Activated CD4-positive, alpha-beta T cell treated with anti-CD3 and anti-CD28 coated beads for 36 hours (primary cell): ENCODE measurements at regions of chr10 and their contacts with region 1.

Region 1: GRCh38 chr10:3740157-3740871 is 44.7 kb downstream of the KLF6 start:
- DNase-seq: peak; percentile 38
- ATAC-seq: peak; percentile 85
- H3K4me3 Mint-ChIP-seq: no peak overlapping the region
- H3K27ac Mint-ChIP-seq: peak overlapping the region; percentile 60
- H3K4me1 Mint-ChIP-seq: peaks cover 33% of the 10 kb centered on the region
- H3K27me3 Mint-ChIP-seq: no peaks in the 10 kb centered on the region

Region 2: DNA sequence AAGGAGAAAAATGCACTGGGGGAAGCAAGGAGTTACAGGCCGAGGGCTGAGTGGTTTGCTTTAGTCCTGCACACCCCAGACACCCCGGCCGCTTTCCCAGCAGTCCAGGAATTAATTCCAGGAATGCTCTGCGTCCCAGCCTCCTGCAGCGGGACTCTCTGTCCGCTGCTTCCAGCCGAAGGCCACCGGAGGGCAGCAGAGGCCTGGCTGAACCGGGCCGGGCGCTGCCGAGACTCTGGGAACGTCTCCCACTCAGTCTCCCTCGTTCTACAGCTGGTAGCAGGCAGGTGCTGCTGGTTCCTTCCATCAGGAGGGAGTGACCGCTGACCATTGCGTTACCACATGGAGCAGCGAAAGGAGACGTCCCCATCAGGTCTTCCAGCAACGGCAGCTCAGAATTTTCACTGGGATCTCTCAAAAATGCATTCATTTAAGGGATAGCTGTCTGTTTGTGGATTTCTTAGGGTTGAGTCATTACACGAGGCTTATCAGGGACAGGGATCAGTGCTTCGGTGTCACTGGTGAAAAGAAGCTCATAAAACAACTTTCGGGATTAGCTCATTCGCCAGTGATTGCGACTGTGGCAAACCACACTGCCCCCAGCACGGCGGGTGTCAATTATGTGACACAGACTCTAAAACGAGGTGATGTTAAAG is 542.8 kb before region 1 on chr10:
- CTCF ChIA-PET with region 1: no interaction called
- POLR2A ChIA-PET with region 1: no interaction called
- intact Hi-C with region 1: loop called in 1 of 2 experiments (anchors 5 kb)
- DNase-seq: peak; percentile 92
- ATAC-seq: peak; percentile 90
- H3K4me3 Mint-ChIP-seq: no peak overlapping the region
- H3K27ac Mint-ChIP-seq: no peak overlapping the region
- H3K4me1 Mint-ChIP-seq: peaks cover 11% of the 10 kb centered on the region
- H3K27me3 Mint-ChIP-seq: peaks cover 60% of the 10 kb centered on the region

Region 3: GRCh38 chr10:3398825-3399646 is 341.3 kb before region 1 on chr10:
- CTCF ChIA-PET with region 1: no interaction called
- POLR2A ChIA-PET with region 1: no interaction called
- intact Hi-C with region 1: no loop called
- DNase-seq: no peak
- ATAC-seq: no peak
- H3K4me3 Mint-ChIP-seq: no peak overlapping the region
- H3K27ac Mint-ChIP-seq: no peak overlapping the region
- H3K4me1 Mint-ChIP-seq: peaks cover 4% of the 10 kb centered on the region
- H3K27me3 Mint-ChIP-seq: peaks cover 5% of the 10 kb centered on the region

Region 4: GRCh38 chr10:3681642-3682554 is 58.4 kb before region 1 on chr10:
- CTCF ChIA-PET with region 1: no interaction called
- POLR2A ChIA-PET with region 1: no interaction called
- intact Hi-C with region 1: no loop called
- DNase-seq: no peak
- ATAC-seq: no peak
- H3K4me3 Mint-ChIP-seq: no peak overlapping the region
- H3K27ac Mint-ChIP-seq: no peak overlapping the region
- H3K4me1 Mint-ChIP-seq: peaks cover 19% of the 10 kb centered on the region
- H3K27me3 Mint-ChIP-seq: no peaks in the 10 kb centered on the region

Region 5: DNA sequence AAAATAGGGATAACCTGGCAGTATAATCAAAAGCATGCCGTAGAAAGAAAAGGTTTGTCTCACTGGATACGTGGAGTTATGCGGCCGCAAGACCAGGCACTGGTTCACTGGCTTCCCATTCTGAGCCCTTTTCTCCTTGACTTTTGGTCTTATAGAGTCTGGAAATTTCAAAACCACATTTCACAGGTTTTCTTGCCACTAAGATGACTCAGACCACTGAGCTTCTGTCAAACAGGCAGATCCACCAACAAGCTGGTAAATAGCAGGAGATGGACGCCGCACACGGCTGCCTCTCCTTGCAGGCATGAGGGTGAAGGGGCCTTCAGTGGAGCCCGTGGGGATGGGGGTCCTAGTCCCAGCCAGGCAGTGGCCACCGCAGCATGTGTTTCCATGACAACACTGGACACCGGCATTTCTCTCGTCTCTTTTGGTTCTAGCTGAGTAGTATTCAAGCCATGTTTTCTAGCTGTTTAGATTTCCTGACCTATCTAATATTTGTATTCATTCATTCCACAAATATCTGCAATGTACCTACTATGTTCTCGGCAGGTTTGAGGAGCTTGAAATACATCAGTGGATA is 10.8 kb before region 1 on chr10:
- CTCF ChIA-PET with region 1: no interaction called
- POLR2A ChIA-PET with region 1: no interaction called
- intact Hi-C with region 1: no loop called
- DNase-seq: no peak
- ATAC-seq: no peak
- H3K4me3 Mint-ChIP-seq: no peak overlapping the region
- H3K27ac Mint-ChIP-seq: no peak overlapping the region
- H3K4me1 Mint-ChIP-seq: peaks cover 3% of the 10 kb centered on the region
- H3K27me3 Mint-ChIP-seq: no peaks in the 10 kb centered on the region

Region 6: GRCh38 chr10:3765146-3765545 is 24.8 kb after region 1 on chr10:
- CTCF ChIA-PET with region 1: interaction called, 3 read pairs
- POLR2A ChIA-PET with region 1: interaction called, 3 read pairs
- intact Hi-C with region 1: loop called in 1 of 2 experiments (anchors 1 kb)
- DNase-seq: peak; percentile 76
- ATAC-seq: peak; percentile 63
- H3K4me3 Mint-ChIP-seq: peak overlapping the region; percentile 51
- H3K27ac Mint-ChIP-seq: peak overlapping the region; percentile 79
- H3K4me1 Mint-ChIP-seq: peaks cover 75% of the 10 kb centered on the region
- H3K27me3 Mint-ChIP-seq: no peaks in the 10 kb centered on the region

Region 7: GRCh38 chr10:3805791-3806461 is 65.6 kb after region 1 on chr10:
- CTCF ChIA-PET with region 1: interaction called, 3 read pairs
- POLR2A ChIA-PET with region 1: interaction called, 10 read pairs
- intact Hi-C with region 1: loop called (anchors 1 to 2 kb)
- DNase-seq: peak; percentile 59
- ATAC-seq: no peak
- H3K4me3 Mint-ChIP-seq: peak overlapping the region; percentile 46
- H3K27ac Mint-ChIP-seq: no peak overlapping the region
- H3K4me1 Mint-ChIP-seq: peaks cover 63% of the 10 kb centered on the region
- H3K27me3 Mint-ChIP-seq: no peaks in the 10 kb centered on the region

Region 8: GRCh38 chr10:3852147-3852904 is 112.0 kb after region 1 on chr10:
- CTCF ChIA-PET with region 1: no interaction called
- POLR2A ChIA-PET with region 1: no interaction called
- intact Hi-C with region 1: loop called (anchors 1 kb)
- DNase-seq: peak; percentile 83
- ATAC-seq: peak; percentile 93
- H3K4me3 Mint-ChIP-seq: peak overlapping the region; percentile 34
- H3K27ac Mint-ChIP-seq: peak overlapping the region; percentile 94
- H3K4me1 Mint-ChIP-seq: peaks cover 48% of the 10 kb centered on the region
- H3K27me3 Mint-ChIP-seq: no peaks in the 10 kb centered on the region

Region 9: GRCh38 chr10:3873728-3874461 is 133.6 kb after region 1 on chr10:
- CTCF ChIA-PET with region 1: no interaction called
- POLR2A ChIA-PET with region 1: no interaction called
- intact Hi-C with region 1: no loop called
- DNase-seq: no peak
- ATAC-seq: peak; percentile 27
- H3K4me3 Mint-ChIP-seq: peak overlapping the region; percentile 15
- H3K27ac Mint-ChIP-seq: peak overlapping the region; percentile 89
- H3K4me1 Mint-ChIP-seq: peaks cover 65% of the 10 kb centered on the region
- H3K27me3 Mint-ChIP-seq: no peaks in the 10 kb centered on the region

Region 10: DNA sequence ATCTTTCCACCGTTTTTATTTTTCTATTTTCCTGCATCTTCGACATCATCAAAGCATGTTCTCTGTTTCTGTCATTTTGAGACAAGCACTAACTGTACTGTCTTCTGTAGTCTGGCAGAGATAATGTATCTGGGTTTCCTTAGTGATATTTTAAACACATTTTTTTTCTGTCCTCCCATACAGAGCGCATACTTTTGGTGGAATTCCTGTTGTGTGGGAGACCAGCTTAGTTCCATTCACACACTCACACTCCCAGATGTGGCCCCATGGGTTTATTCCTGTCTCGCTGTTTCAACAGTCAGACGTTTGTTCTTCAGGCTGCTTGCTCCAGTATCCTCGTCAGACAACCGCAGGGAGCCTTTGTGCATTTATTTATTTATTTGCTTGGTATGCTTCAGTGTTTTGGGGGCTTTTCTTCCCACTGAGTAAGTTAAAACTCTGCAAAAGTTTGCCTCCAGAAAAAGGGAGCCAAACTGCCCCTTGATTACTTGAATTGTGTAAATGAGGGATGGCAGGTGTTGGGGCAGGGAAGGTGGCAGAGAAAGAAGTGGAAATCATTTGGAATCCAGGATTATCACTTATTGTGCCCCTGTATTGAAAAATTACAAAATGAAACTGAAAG is 501.5 kb after region 1 on chr10:
- CTCF ChIA-PET with region 1: no interaction called
- POLR2A ChIA-PET with region 1: no interaction called
- intact Hi-C with region 1: loop called in 1 of 2 experiments (anchors 1 kb)
- DNase-seq: no peak
- ATAC-seq: no peak
- H3K4me3 Mint-ChIP-seq: no peak overlapping the region
- H3K27ac Mint-ChIP-seq: no peak overlapping the region
- H3K4me1 Mint-ChIP-seq: peaks cover 35% of the 10 kb centered on the region
- H3K27me3 Mint-ChIP-seq: no peaks in the 10 kb centered on the region